Posterior vena cava (tissue), 2 donors: ENCODE measurements at regions of chr5 and their contacts with region 1.

Region 1: DNA sequence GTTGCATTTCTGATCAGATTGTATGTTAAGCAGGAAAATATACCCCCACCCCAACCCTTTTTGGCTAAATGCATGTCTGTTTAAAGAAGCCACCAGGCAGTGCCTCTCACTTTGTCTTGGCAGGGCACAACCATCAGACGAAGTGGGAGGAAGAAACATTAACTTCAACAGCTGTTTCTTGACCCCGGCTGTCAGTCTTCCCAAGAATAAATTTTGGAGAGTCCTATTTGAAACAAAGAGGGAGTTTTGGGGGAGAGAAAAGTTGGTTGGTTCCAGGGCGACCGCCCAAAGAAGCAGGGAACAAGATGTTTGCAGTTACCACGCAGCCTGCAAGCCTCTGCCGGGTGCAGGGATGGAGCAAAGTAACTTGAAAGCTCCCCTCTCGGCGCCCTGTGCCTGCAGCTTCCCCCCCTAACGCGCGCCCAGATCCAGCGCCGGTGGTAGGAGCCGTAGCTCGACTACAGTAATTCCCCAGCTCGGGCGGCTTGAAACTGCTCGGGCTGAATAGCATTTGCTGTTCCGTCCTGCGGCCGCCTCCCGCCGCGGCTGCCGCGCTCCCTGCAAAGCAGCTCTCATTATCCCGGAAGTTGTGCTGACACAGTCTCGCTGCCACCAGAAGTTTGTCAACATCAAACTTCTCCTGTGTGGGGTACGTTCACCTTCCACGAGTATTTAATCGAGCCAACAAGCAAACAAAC is 100.7 kb upstream of the SSBP2 start:
- DNase-seq: peak; percentile 98

Region 2: DNA sequence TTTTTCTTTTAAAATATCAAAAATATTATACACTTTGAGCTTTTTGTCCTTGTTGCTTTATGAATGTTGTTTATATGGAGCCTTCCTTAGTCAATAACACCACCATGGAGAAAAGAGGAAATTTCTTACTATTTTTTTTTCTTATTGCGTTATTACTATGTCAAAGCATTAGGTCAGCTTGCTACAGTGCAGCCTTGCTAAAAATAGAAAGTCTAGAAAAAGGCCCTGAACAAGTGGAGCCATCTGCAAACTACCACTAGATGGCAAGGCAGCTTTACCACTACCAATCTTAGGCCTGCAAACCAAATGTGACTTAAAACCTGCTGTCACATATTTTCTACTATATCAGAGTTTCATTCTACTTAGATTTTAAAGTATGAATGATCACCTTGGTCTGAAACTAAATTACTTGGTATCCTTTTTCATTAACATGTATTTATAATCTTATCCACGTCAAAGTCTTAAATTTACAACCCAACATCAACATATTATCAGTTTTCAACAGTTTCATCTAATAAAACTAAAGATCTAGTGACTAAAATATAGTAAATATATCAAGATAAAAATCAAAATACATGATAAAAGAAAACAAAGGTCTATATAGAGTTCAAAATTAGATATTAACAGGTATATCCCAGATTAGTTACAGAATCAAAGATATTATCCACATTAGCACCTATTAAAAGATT is 344.6 kb before region 1 on chr5:
- intact Hi-C with region 1: loop called in 1 of 2 experiments (anchors 10 kb)
- DNase-seq: no peak

Region 3: DNA sequence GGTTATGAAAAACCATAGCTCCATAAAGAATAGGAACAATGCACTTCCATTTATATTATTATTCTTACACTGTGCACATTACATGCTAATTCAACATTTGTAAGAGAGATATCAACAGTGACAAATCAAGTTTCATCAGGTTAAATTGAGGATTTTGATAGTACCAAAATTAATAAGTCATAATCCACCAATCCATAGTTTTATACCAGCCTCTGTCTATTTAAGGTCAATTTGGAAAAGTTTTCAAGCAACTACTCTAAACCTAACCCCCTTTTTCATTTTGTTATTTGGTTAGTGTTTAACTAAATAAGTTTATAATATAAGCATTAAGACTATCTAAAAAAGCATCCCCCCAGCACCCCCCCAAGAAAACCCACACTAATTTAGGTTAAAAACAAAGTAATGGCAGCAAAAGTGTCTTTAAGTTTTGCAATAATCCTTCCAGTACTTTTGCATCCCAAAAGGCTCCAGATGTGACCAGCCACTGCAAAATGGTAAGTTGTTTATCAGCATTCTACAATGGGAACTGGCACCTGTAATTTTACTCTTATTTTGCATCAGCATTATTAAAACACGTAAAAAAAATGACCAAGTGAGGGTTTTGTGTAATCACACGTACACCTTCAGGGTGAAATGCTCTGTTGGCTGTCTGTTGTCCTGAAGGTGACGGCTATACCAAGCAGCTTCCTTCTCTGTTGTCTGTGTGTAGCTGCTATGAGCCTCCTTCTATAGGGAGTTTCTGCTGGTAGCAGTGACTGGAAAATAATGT is 64.0 kb before region 1 on chr5:
- intact Hi-C with region 1: loop called (anchors 1 to 2 kb)
- DNase-seq: no peak

Region 4: DNA sequence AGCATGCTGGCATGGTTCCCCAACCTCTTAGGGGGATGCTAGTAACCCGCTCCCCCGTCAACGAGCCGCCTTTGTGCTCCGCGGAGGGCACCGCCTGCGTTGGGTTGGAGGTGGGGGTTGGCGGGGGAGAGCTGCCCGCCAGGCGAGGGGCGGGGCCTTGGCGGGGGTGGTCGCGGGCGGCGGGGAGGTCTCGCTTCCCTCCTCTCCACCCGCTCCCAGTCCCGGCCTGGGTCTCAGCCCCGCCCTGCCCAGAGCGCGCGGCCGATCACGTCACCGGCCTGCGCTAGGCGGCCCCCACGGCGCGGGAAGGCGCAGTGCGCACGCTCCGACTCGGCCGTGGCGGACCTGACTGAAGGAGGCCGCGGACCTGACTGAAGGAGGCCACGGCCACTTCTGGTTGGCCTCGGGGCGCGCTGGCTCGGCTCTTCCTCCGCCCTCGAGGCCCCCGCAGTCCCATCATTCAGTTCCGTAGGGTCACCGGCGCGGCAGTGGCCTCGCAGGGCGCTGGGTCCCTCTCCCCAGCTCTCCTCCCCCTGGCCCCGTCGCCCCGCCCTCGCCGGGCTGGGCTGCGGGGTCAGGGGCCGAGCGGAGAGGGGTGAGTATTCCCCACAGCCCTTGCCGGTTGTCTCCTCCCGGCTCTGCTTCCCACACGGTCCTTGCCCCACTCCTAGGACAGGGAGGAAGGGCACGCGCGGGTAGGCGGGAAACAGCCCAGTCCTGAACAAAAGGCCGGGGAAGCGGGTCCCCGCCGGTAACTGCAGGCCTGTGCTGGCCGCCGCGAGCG is 120.3 kb after region 1 on chr5 and contains the start of gene ATG10:
- intact Hi-C with region 1: loop called in 1 of 2 experiments (anchors 10 kb)
- DNase-seq: peak; percentile 97
- total RNA-seq, gene ATG10: 6.8 to 9.8 TPM

Region 5: GRCh38 chr5:82165740-82166530 is 314.3 kb after region 1 on chr5:
- intact Hi-C with region 1: loop called in 1 of 2 experiments (anchors 10 kb)
- DNase-seq: peak; percentile 85